Left colon (tissue), 2 donors: ENCODE measurements at regions of chr1 and their contacts with region 1.

Region 1: GRCh38 chr1:152052606-152053005 is 15.8 kb upstream of the S100A11 start:
- DNase-seq: peak; percentile 77 to 90
- ATAC-seq: peak; percentile 32

Region 2: GRCh38 chr1:152374451-152374850 is 321.8 kb after region 1 on chr1:
- intact Hi-C with region 1: no loop called
- DNase-seq: no peak
- ATAC-seq: no peak

Region 3: GRCh38 chr1:152451254-152451653 is 398.6 kb after region 1 on chr1:
- intact Hi-C with region 1: loop called in 1 of 2 experiments (anchors 5 kb)
- DNase-seq: no peak
- ATAC-seq: no peak